BJ (cell line): ENCODE measurements at regions of chr21 and their contacts with region 1.

Region 1: GRCh38 chr21:34129039-34129891 is 55.9 kb downstream of the MRPS6 start:
- DNase-seq: peak; percentile 59
- H3K4me3 ChIP-seq: no peak overlapping the region
- H3K27me3 ChIP-seq: no peaks in the 10 kb centered on the region
- CTCF ChIP-seq: peak; percentile 71

Region 2: GRCh38 chr21:34035619-34036354 is 93.5 kb before region 1 on chr21:
- CTCF ChIA-PET with region 1: no interaction called
- POLR2A ChIA-PET with region 1: interaction called, 16 read pairs
- DNase-seq: no peak
- H3K4me3 ChIP-seq: no peak overlapping the region
- H3K27me3 ChIP-seq: no peaks in the 10 kb centered on the region
- CTCF ChIP-seq: no peak